ENCODE measurements at regions of chr2 and their contacts with region 1.

Region 1: DNA sequence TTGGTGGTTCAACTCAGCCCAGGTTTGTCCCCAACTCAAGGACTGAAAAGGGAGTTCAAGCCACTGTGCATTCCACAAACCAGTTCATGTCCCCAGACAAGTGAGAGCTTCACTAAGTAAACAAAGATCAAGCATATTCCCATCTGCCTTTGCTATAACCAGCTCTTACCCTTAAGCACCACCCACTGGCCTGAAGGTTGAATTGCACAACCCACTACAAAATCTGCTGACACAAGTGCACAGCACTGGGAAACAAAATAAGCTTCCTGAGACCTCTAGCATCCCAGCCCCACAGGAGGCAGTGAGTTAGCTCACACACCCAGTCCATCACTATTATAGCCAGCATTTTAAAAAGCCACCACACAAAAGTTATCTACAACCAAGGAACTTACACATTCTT is 516.6 kb downstream of the NR4A2 start:
- DNase-seq: peak; percentile 44
- ATAC-seq: peak; percentile 96
- H3K4me3 Mint-ChIP-seq: no peak overlapping the region
- H3K27ac Mint-ChIP-seq: no peak overlapping the region
- H3K4me1 Mint-ChIP-seq: peaks cover 10% of the 10 kb centered on the region; the same call in 1 of the 2 replicates
- H3K27me3 Mint-ChIP-seq: no peaks in the 10 kb centered on the region
- CTCF ChIP-seq: no peak; the same call in 1 of the 2 replicates

Region 2: DNA sequence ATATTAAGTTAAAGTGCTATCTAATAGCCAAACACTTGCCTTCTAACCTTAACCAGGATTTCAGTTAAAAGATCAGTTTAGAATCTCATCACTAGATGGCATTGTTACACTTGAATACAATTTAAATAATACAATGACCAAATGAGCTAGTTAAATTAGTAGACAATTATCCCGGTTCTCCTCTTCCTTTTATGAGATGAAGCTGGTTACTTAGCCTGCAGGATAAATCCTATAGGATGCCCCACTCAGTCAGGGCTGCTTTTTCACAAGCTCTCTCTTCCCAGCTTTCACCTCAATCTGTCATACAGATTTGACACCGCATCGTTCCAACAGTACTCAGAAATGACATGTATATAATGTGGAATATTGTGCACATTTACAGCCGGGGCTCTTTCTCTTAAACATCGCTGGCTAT is 438.6 kb before region 1 on chr2:
- CTCF ChIA-PET with region 1: interaction called, 24 read pairs
- POLR2A ChIA-PET with region 1: no interaction called
- DNase-seq: no peak
- ATAC-seq: peak; percentile 51; the same call in 1 of the 2 replicates
- H3K4me3 Mint-ChIP-seq: no peak overlapping the region
- H3K27ac Mint-ChIP-seq: no peak overlapping the region
- H3K4me1 Mint-ChIP-seq: no peaks in the 10 kb centered on the region
- H3K27me3 Mint-ChIP-seq: no peaks in the 10 kb centered on the region
- CTCF ChIP-seq: peak; percentile 34

Region 3: DNA sequence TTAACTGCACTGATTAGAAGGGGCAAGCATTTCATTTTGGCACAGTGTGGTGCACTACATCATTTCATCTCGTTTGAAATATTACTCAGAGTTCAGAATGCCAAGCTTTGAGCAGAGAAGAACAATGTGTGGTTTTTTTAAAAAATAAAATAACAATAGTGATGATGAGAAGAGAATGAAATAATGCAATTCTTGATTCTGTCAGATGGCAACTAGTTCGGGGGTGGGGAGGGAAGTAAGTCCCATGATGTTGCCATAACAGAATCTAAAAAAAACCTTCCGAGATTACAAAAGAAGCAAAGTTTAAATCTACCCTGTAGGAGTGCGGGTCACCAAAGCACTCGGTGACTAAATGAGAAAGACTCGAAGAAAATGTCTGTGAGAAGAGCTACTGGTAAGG is 26.2 kb after region 1 on chr2:
- CTCF ChIA-PET with region 1: interaction called, 12 read pairs
- POLR2A ChIA-PET with region 1: no interaction called
- DNase-seq: no peak
- ATAC-seq: peak; percentile 25
- H3K4me3 Mint-ChIP-seq: peak overlapping the region; percentile 33; the same call in 1 of the 2 replicates
- H3K27ac Mint-ChIP-seq: peak overlapping the region; percentile 80
- H3K4me1 Mint-ChIP-seq: peaks cover 72% of the 10 kb centered on the region
- H3K27me3 Mint-ChIP-seq: no peaks in the 10 kb centered on the region
- CTCF ChIP-seq: no peak

Region 4: DNA sequence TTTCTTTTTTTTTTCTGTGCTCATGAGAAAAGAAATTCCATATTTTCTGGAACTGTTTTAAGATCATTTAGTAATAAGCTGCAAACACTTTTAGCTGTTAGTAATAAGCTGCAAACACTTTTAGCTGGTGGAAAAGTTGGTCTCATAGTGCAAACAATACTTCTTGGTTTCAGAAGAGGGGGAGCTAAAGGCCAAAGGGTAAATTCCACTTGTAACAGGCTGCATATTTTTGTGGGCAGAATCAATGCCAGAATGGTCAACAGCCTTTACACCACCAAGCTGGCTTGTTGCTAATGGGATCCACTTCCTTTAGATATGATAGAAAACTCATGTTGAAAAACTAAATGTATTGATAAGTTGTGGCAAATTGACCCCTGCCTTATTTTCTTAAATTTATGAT is 159.8 kb after region 1 on chr2:
- CTCF ChIA-PET with region 1: no interaction called
- POLR2A ChIA-PET with region 1: no interaction called
- DNase-seq: no peak
- ATAC-seq: no peak
- H3K4me3 Mint-ChIP-seq: no peak overlapping the region
- H3K27ac Mint-ChIP-seq: no peak overlapping the region
- H3K4me1 Mint-ChIP-seq: peaks cover 26% of the 10 kb centered on the region
- H3K27me3 Mint-ChIP-seq: no peaks in the 10 kb centered on the region
- CTCF ChIP-seq: no peak